ENCODE measurements at regions of chr12 and their contacts with region 1.

Region 1: GRCh38 chr12:117836999-117837736 is 131.6 kb downstream of the KSR2 start:
- DNase-seq: peak; percentile 79
- H3K4me3 ChIP-seq: no peak overlapping the region
- H3K27ac ChIP-seq: no peak overlapping the region
- H3K27me3 ChIP-seq: no peaks in the 10 kb centered on the region
- CTCF ChIP-seq: peak; percentile 99

Region 2: GRCh38 chr12:117236456-117237001 is 600.6 kb before region 1 on chr12:
- in situ Hi-C with region 1: loop called (anchors 25 kb)
- DNase-seq: peak; percentile 55
- H3K4me3 ChIP-seq: no peak overlapping the region
- H3K27ac ChIP-seq: no peak overlapping the region
- H3K27me3 ChIP-seq: no peaks in the 10 kb centered on the region
- CTCF ChIP-seq: peak; percentile 81

Region 3: DNA sequence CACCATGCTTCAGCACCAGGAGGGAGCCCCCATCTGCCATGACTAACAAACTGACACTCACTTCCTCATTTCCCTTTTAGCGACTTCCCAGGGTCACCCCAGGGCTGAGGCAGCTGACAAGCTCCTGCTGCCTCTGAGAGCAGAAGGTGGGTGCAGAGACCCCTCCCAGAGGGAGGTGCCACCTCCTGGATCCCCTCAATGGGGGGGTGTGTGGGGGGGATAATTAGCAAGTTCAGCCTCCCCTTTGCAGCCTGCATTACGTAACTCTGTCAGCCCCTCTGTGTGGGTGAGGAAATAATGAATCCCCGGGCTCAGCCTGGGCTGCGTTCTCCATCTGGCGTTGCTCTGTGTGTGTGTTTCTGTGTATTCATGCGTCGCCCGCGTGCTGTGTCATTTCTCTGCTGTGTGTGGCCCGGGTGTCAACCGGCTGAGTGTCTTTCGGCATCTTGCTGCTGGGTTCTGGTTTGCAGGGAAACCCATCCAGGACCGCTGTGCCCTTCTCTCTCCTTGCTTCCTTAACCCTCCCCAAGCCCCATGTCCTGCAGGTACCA is 503.8 kb before region 1 on chr12:
- in situ Hi-C with region 1: no loop called
- DNase-seq: no peak
- H3K4me3 ChIP-seq: no peak overlapping the region
- H3K27ac ChIP-seq: no peak overlapping the region
- H3K27me3 ChIP-seq: no peaks in the 10 kb centered on the region
- CTCF ChIP-seq: no peak

Region 4: GRCh38 chr12:117367011-117367638 is 470.0 kb before region 1 on chr12:
- in situ Hi-C with region 1: loop called (anchors 25 kb)
- DNase-seq: peak; percentile 70
- H3K4me3 ChIP-seq: no peak overlapping the region
- H3K27ac ChIP-seq: no peak overlapping the region
- H3K27me3 ChIP-seq: no peaks in the 10 kb centered on the region
- CTCF ChIP-seq: peak; percentile 92